Activated CD4-positive, alpha-beta T cell treated with anti-CD3 and anti-CD28 coated beads, Interleukin-2, amount 10 ng/mL, durations not matched to agents 24 days and 14 days (primary cell): ENCODE measurements at regions of chr3 and their contacts with region 1.

Region 1: DNA sequence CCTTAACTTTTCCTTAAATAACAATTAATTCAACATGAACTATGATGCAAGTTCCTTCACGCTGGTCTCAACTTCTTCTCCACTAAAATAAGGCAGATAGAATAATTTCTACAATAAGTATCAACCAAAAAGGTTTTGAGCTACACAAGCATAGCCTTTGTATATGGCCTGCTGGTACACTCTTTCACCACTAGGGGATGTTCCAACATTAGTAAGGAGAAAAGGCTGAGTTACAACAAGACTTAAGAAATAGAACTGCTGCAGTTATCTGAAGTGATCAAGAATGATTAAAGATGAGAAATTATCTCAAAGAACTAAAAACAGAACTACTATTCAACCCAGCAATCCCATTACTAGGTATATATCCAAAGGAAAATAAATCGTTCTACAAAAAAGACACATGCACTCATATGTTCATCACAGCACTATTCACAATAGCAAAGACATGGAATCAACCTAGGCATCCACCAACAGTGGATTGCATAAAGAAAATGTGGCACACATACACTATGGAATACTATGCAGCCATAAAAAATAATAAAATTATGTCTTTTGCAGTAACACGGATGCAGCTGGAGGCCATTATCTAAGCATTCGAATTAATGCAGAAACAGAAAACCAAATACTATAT is 14.4 kb downstream of the ATP13A3 start:
- DNase-seq: peak; percentile 80
- H3K4me3 Mint-ChIP-seq: no peak overlapping the region
- H3K27ac Mint-ChIP-seq: no peak overlapping the region
- H3K4me1 Mint-ChIP-seq: peaks cover 21% of the 10 kb centered on the region
- H3K27me3 Mint-ChIP-seq: no peaks in the 10 kb centered on the region

Region 2: DNA sequence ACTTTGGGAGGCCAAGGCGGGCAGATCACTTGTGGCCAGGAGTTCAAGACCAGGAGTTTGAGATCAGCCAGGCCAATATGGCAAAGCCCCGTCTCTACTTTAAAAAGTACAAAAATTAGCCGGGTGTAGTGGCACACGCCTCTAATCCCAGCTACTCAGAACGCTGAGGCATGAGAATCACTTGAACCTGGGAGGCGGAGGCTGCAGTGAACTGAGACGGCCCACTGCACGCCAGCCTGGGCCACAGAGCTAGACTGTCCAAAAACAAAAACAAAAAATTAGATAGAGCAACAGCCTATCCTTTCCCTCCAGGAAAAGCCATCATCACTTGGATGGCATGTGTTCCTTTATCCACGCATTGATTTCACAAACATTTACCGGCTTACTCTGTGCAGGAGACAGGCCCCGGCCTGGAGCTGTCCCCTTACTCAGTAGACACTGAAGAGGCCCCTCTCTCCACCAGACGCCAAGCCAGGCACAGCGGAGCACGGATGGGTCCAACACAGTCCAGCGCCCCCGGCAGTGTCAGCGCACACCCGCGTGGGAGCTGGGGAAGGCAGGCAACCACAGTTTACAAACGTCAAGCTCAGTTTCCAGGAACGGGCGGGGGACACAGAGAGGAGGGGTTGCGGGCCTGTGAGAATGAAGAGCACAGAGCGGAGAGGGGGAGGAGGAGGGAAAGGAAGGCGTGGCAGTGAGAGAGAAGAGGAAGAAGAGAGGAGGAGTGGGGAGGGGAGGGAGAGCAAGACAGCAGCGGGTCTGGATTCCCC is 76.4 kb before region 1 on chr3:
- intact Hi-C with region 1: no loop called
- DNase-seq: peak; percentile 92
- H3K4me3 Mint-ChIP-seq: peak overlapping the region; percentile 82
- H3K27ac Mint-ChIP-seq: peak overlapping the region; percentile 78
- H3K4me1 Mint-ChIP-seq: peaks cover 47% of the 10 kb centered on the region
- H3K27me3 Mint-ChIP-seq: peaks cover 23% of the 10 kb centered on the region

Region 3: GRCh38 chr3:194573691-194574437 is 101.5 kb after region 1 on chr3:
- intact Hi-C with region 1: loop called (anchors 1 kb)
- DNase-seq: peak; percentile 79
- H3K4me3 Mint-ChIP-seq: no peak overlapping the region
- H3K27ac Mint-ChIP-seq: no peak overlapping the region
- H3K4me1 Mint-ChIP-seq: peaks cover 18% of the 10 kb centered on the region
- H3K27me3 Mint-ChIP-seq: peaks cover 26% of the 10 kb centered on the region

Region 4: GRCh38 chr3:194592798-194593752 is 120.7 kb after region 1 on chr3:
- intact Hi-C with region 1: loop called (anchors 1 kb)
- DNase-seq: no peak
- H3K4me3 Mint-ChIP-seq: no peak overlapping the region
- H3K27ac Mint-ChIP-seq: no peak overlapping the region
- H3K4me1 Mint-ChIP-seq: peaks cover 6% of the 10 kb centered on the region
- H3K27me3 Mint-ChIP-seq: no peaks in the 10 kb centered on the region